ENCODE measurements at regions of chr2 and their contacts with region 1.

Region 1: DNA sequence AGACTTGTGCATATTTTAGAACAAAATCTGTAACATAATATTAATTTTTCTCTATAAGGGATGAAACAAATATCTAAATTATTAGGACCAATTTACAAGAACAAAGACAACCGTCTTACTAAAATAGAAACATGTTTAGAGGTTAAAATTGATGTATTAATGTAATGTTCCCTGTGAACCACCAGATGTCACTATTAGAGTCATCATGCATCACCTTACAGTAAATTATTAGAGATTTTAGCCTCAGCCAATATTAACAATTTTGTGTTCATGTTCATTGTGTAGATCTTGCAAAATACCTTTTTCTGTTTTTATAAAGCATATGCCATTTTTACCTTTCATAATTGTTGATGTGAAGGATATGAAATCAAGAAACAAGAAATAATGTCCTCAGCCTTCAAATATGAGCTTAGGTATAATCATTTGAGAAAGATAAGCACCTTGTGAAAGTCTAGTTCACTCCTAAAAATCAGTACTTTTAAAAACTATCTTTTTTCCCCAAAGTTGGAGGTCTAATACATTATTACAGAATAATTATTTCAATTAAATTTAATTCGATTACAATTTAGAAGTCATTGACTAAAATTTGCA is 344.3 kb upstream of the KCNH7 start:
- DNase-seq: peak; percentile 35
- H3K4me3 ChIP-seq: no peak overlapping the region
- H3K27ac ChIP-seq: no peak overlapping the region
- H3K4me1 ChIP-seq: peaks cover 8% of the 10 kb centered on the region
- H3K27me3 ChIP-seq: no peaks in the 10 kb centered on the region
- CTCF ChIP-seq: peak; percentile 33 to 38
- POLR2A ChIP-seq: no peak

Region 2: DNA sequence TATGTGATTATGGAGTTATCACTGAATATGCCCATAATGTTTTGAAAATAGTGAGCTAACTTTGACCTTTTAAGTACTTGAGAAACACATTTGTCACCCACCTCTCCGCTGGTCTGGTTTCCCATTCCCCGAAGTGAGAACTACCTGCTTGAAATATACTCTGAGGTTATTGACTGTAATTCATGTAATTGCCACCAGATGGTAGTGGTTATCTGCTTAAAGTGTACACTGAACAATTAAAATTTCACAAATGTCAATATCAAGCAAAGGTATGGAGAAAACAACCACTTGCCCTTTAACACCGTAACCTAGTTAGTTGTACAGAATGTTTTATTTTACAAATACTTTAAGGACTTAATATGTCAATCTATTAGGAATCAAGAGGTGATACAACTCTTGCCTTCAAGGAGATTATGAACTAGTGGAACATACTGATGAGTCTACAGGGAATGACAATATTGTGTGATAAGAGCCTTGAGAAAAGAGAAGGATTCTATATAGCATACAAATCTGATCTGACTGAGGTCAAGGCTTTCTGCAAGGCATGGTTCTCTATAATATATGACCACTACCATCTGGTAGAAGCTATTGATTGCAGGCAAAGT is 27.5 kb before region 1 on chr2:
- CTCF ChIA-PET with region 1: interaction called, 28 read pairs
- POLR2A ChIA-PET with region 1: no interaction called
- dilution Hi-C with region 1: no loop called
- intact Hi-C with region 1: loop called (anchors 1 kb)
- DNase-seq: peak; percentile 59
- H3K4me3 ChIP-seq: no peak overlapping the region
- H3K27ac ChIP-seq: no peak overlapping the region
- H3K4me1 ChIP-seq: peaks cover 25% of the 10 kb centered on the region
- H3K27me3 ChIP-seq: no peaks in the 10 kb centered on the region
- CTCF ChIP-seq: peak; percentile 32 to 34
- POLR2A ChIP-seq: no peak

Region 3: DNA sequence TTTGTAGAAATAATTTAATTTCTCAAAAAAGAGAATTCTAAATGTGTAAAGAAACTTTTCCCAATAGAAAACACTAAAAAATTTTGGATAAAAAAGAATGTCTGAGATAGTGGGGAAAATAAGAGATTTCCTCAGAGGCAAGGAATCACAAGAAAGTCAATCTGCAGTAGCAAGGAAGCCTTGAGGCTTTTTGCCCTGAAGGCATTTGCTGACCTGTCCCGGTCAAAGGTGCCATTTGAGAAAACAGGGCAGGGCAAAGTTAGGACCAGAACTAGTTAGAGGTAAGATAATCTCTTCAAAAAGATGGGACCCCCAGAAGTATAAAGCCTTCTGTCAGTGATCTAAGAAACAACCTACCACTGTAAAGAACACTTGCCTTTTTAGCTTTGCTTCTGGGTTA is 95.3 kb after region 1 on chr2:
- CTCF ChIA-PET with region 1: no interaction called
- POLR2A ChIA-PET with region 1: no interaction called
- dilution Hi-C with region 1: no loop called
- intact Hi-C with region 1: no loop called
- DNase-seq: no peak
- H3K4me3 ChIP-seq: no peak overlapping the region
- H3K27ac ChIP-seq: no peak overlapping the region
- H3K4me1 ChIP-seq: no peaks in the 10 kb centered on the region
- H3K27me3 ChIP-seq: no peaks in the 10 kb centered on the region
- CTCF ChIP-seq: no peak
- POLR2A ChIP-seq: no peak

Region 4: DNA sequence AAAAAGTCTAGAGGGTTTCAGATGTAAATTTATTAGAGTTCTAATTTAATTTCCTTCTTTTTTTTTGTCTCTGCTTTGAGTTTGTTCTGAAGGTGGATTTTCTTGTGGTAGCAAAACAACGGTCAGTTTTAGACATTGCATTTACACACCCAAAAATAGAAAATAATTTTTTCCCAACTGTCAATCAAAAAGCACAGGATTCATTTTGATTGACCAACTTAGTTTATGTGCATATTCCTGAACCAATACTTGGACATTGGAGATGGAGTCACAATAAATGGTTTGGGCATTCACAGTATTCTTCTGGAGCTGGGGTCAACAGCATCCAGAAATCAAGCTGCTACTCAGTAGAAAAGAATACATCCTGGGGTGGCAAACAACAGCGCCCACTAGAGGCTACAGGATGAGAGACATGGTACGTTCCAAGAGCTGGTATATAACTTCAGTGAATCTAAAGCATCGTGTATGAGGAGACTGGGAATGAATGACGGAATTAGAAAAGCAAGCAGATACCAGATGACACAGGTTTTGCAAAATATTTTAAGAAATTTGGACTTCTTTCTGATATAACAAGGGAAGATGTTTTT is 695.8 kb after region 1 on chr2:
- CTCF ChIA-PET with region 1: interaction called, 13 read pairs
- POLR2A ChIA-PET with region 1: interaction called, 3 read pairs
- dilution Hi-C with region 1: no loop called
- intact Hi-C with region 1: no loop called
- DNase-seq: peak; percentile 28
- H3K4me3 ChIP-seq: no peak overlapping the region
- H3K27ac ChIP-seq: no peak overlapping the region
- H3K4me1 ChIP-seq: no peaks in the 10 kb centered on the region
- H3K27me3 ChIP-seq: no peaks in the 10 kb centered on the region
- CTCF ChIP-seq: peak; percentile 52 to 61
- POLR2A ChIP-seq: no peak

Region 5: DNA sequence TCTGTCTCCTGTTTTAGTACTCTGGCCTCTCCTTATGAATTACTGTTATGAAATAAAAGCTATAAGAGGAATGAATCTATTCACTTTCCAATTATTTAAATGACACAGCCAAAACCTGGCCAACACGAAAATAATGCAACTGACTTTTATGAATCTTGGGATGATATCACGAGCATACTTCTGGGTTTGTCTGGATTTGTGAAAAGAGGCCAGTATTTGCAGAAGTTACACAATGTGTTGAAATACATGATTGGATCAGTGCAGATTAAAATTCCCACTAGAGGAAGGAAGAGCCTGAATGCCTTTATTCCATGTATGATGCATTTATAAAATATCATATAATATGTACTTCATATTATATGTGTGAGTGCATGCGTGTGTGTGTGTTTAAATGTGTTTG is 1020.3 kb after region 1 on chr2:
- CTCF ChIA-PET with region 1: interaction called, 10 read pairs
- POLR2A ChIA-PET with region 1: no interaction called
- dilution Hi-C with region 1: no loop called
- intact Hi-C with region 1: no loop called
- DNase-seq: no peak
- H3K4me3 ChIP-seq: no peak overlapping the region
- H3K27ac ChIP-seq: no peak overlapping the region
- H3K4me1 ChIP-seq: no peaks in the 10 kb centered on the region
- H3K27me3 ChIP-seq: no peaks in the 10 kb centered on the region
- CTCF ChIP-seq: no peak
- POLR2A ChIP-seq: no peak

Region 6: DNA sequence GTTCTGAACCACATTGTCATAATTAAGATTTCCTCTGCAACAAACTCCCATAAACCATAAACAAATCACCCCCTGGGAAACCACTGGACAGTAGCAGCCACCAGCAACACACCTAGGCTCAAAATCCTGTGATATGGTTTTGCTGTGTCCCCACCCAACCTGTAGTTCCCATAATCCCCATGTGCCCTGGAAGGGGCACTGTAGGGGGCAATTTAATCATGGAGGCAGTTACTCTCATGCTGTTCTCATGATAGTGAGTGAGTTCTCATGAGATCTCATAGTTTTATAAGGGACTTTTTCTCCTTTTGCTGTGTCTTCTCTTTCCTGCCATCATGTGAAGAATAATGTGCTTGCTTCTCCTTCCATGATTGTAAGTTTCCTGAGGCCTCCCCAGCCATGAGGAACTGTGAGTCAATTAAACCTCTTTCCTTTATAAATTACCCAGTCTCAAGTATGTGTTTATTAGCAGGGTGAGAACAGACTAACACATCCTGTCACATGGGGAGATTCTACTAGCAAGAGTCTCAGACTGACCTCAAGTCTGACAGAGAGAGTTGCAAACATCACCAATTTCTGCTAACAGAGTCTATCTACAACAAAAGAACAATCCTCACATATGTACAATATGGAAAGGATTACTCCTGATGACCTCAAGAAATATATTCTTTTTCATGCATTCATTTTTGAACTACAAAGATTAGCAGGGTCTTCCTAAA is 1255.8 kb after region 1 on chr2:
- CTCF ChIA-PET with region 1: interaction called, 44 read pairs
- POLR2A ChIA-PET with region 1: no interaction called
- dilution Hi-C with region 1: no loop called
- intact Hi-C with region 1: loop called (anchors 5 kb)
- DNase-seq: peak; percentile 4
- H3K4me3 ChIP-seq: no peak overlapping the region
- H3K27ac ChIP-seq: no peak overlapping the region
- H3K4me1 ChIP-seq: no peaks in the 10 kb centered on the region
- H3K27me3 ChIP-seq: no peaks in the 10 kb centered on the region
- CTCF ChIP-seq: no peak
- POLR2A ChIP-seq: no peak

Region 7: DNA sequence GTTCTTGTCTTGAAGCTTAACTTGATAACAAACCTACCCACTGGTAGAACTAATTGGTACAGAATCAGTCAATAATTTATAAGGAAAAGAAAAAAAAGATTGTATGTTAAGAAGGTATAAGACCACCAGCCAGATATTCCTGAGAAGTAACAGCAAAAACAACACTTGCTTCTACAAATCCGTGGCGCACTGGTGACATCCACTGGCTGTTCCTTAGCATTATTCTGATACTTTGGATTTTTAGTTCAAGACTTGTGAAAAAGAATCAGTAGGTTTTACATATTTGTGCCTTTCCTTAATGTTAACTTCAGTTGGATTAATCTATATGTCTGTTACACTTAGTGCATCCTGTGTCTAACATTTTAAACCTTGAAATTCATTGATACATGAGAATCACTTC is 1296.6 kb after region 1 on chr2:
- CTCF ChIA-PET with region 1: interaction called, 89 read pairs
- POLR2A ChIA-PET with region 1: no interaction called
- dilution Hi-C with region 1: no loop called
- intact Hi-C with region 1: loop called (anchors 1 kb)
- DNase-seq: peak; percentile 58
- H3K4me3 ChIP-seq: no peak overlapping the region
- H3K27ac ChIP-seq: no peak overlapping the region
- H3K4me1 ChIP-seq: no peaks in the 10 kb centered on the region
- H3K27me3 ChIP-seq: no peaks in the 10 kb centered on the region
- CTCF ChIP-seq: peak; percentile 13 to 28
- POLR2A ChIP-seq: no peak

Region 8: GRCh38 chr2:164538240-164538866 is 1355.5 kb after region 1 on chr2:
- CTCF ChIA-PET with region 1: interaction called, 70 read pairs
- POLR2A ChIA-PET with region 1: no interaction called
- dilution Hi-C with region 1: no loop called
- intact Hi-C with region 1: loop called (anchors 5 kb)
- DNase-seq: peak; percentile 56
- H3K4me3 ChIP-seq: no peak overlapping the region
- H3K27ac ChIP-seq: no peak overlapping the region
- H3K4me1 ChIP-seq: peaks cover 5% of the 10 kb centered on the region
- H3K27me3 ChIP-seq: no peaks in the 10 kb centered on the region
- CTCF ChIP-seq: peak; percentile 58 to 68
- POLR2A ChIP-seq: no peak

Measured in endothelial cell of umbilical vein (primary cell).